Activated naive CD8-positive, alpha-beta T cell treated with anti-CD3 and anti-CD28 coated beads, Interleukin-2, amount 10 ng/mL, durations not matched to agents 7 days and 5 days (primary cell): ENCODE measurements at regions of chr17 and their contacts with region 1.

Region 1: GRCh38 chr17:74770498-74771318 is 5.4 kb downstream of the NAT9 start:
- DNase-seq: peak; percentile 81
- ATAC-seq: peak; percentile 86
- H3K4me3 Mint-ChIP-seq: no peak overlapping the region
- H3K27ac Mint-ChIP-seq: peak overlapping the region; percentile 42
- H3K4me1 Mint-ChIP-seq: peaks cover 24% of the 10 kb centered on the region
- H3K27me3 Mint-ChIP-seq: no peaks in the 10 kb centered on the region

Region 2: DNA sequence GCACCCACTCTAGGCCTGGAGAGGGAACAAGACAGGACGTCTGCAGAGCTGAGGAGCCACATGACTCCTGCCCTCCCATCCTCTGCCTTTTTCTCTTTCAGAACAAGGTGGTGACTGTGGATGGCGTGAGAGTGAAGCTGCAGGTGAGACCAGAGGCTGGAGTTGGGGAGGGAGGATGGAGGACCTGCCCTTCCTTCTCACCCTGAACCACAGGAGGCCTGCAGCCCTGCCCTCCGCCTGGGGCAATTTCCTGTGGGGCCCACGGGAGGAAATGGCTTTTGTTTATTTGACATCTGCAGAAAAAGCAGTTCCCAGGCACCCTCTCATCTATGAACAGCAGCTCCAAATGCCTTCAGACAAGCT is 28.6 kb before region 1 on chr17:
- POLR2A ChIA-PET with region 1: interaction called, 11 read pairs
- DNase-seq: peak; percentile 73
- ATAC-seq: peak; percentile 46
- H3K4me3 Mint-ChIP-seq: peak overlapping the region; percentile 77
- H3K27ac Mint-ChIP-seq: peak overlapping the region; percentile 94
- H3K4me1 Mint-ChIP-seq: peaks cover 70% of the 10 kb centered on the region
- H3K27me3 Mint-ChIP-seq: no peaks in the 10 kb centered on the region

Region 3: GRCh38 chr17:74748529-74749365 is 22.0 kb before region 1 on chr17 and contains the start of gene NHERF1:
- POLR2A ChIA-PET with region 1: interaction called, 38 read pairs
- DNase-seq: peak; percentile 99
- ATAC-seq: peak; percentile 85
- H3K4me3 Mint-ChIP-seq: peak within 1 kb of the TSS; percentile 93
- H3K27ac Mint-ChIP-seq: peak within 1 kb of the TSS; percentile 77
- H3K4me1 Mint-ChIP-seq: peaks cover 56% of the 10 kb centered on the region
- H3K27me3 Mint-ChIP-seq: no peaks in the 10 kb centered on the region
- total RNA-seq, gene NHERF1: 241 to 244 TPM

Region 4: GRCh38 chr17:74862108-74862964 is 91.6 kb after region 1 on chr17:
- POLR2A ChIA-PET with region 1: no interaction called
- DNase-seq: peak; percentile 81
- ATAC-seq: peak; percentile 59
- H3K4me3 Mint-ChIP-seq: no peak overlapping the region
- H3K27ac Mint-ChIP-seq: no peak overlapping the region
- H3K4me1 Mint-ChIP-seq: peaks cover 11% of the 10 kb centered on the region
- H3K27me3 Mint-ChIP-seq: peaks cover 38% of the 10 kb centered on the region